ENCODE measurements at regions of chr1 and their contacts with region 1.

Region 1: DNA sequence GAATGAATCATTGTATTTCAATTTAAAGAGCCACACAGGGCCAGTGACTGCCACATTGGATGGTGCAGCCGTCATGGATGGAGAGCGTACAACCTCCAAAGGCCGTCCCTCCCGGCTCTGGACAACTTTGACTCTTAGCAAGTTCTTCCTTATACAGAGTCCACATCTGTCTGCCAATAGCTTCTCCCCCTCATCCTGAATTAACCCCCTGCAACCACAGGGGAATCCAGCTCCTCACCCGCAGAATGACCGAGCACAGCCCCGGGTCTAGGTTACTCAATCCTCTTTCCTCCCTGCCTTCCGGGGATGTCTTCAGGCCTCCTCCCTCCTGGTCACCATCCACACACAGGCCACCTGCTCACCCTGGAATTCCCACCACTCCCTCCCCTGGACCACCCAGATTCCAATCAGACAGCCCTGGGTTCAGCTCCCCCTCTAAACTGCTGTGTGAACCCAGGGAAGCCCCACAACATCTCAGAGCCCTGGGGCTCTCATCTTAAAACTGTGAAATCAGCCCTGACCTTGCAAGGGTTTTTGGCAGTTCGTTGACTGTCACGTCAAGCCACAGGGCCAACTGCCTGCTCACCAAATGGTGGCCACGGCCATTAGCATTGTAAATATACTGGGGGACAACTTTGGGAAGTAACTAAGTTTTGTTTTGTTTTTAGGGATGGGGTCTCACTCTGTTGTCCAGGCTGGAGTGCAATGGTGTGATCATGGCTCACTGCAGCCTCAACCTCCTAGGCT is 54.3 kb downstream of the HSPG2 start:
- DNase-seq: no peak
- ATAC-seq: no peak
- H3K4me3 ChIP-seq: no peak overlapping the region
- H3K27ac ChIP-seq: no peak overlapping the region
- H3K4me1 ChIP-seq: no peaks in the 10 kb centered on the region
- H3K27me3 ChIP-seq: no peaks in the 10 kb centered on the region
- CTCF ChIP-seq: no peak
- EP300 ChIP-seq: no peak
- POLR2A ChIP-seq: no peak
- RAD21 ChIP-seq: no peak

Region 2: DNA sequence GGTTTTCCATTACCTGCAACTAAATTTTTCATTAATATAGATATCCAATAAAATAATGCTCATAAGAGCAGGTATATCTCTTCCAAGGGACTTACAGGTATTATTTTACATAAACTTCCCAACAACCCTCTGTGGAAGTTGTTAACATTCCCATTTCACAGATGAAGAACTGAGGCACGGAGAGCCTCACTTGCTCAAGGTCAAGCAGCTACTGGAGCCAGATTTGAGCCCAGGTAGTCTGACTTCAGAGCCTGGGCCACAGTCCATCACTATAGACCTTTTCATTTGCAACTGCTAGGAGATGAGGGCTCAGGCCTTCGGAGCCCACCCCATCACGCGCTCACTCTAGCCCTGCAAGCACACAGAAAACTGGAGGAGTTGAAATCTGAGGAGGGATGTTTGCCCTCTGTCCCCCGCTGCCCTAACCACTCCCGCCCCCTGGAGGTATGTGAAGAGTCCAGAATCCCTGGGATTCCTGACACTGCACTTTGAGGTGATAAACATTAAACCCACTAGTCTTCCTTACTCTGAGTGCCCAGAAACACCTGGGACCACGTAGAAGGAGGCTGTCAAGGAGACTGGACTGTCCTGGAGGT is 385.3 kb before region 1 on chr1:
- CTCF ChIA-PET with region 1: no interaction called
- POLR2A ChIA-PET with region 1: interaction called, 11 read pairs
- RAD21 ChIA-PET with region 1: no interaction called
- SMC1A ChIA-PET with region 1: no interaction called
- in situ Hi-C with region 1: no loop called
- intact Hi-C with region 1: no loop called
- DNase-seq: no peak
- ATAC-seq: no peak
- H3K4me3 ChIP-seq: no peak overlapping the region
- H3K27ac ChIP-seq: no peak overlapping the region
- H3K4me1 ChIP-seq: no peaks in the 10 kb centered on the region
- H3K27me3 ChIP-seq: peaks cover 0 to 5% of the 10 kb centered on the region in 2 experiments; a peak in 3 of 4 replicates
- CTCF ChIP-seq: no peak
- EP300 ChIP-seq: no peak
- POLR2A ChIP-seq: no peak
- RAD21 ChIP-seq: no peak

Region 3: DNA sequence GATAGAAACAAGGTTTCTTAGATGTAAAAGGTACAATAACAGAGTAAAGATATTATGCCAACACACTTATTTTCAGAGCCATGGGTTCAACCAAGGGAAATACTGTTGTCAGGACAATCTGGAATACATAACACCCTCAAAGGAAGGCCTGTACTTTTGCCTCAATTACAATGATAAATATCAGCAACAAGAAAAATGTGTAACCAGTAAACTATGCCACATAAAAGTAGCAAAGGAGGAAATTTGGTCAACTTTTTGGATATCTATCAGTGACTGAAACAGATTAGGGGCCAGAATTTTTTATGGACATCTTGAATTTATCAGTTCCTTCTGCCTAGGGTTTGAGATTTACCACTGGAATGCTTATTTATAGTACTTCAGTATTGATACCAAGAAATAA is 189.1 kb before region 1 on chr1:
- CTCF ChIA-PET with region 1: no interaction called
- POLR2A ChIA-PET with region 1: no interaction called
- RAD21 ChIA-PET with region 1: no interaction called
- SMC1A ChIA-PET with region 1: no interaction called
- in situ Hi-C with region 1: no loop called
- intact Hi-C with region 1: no loop called
- DNase-seq: no peak
- ATAC-seq: no peak
- H3K4me3 ChIP-seq: no peak overlapping the region
- H3K27ac ChIP-seq: no peak overlapping the region
- H3K4me1 ChIP-seq: no peaks in the 10 kb centered on the region
- H3K27me3 ChIP-seq: no peaks in the 10 kb centered on the region
- CTCF ChIP-seq: no peak
- EP300 ChIP-seq: no peak
- POLR2A ChIP-seq: no peak
- RAD21 ChIP-seq: no peak

Region 4: DNA sequence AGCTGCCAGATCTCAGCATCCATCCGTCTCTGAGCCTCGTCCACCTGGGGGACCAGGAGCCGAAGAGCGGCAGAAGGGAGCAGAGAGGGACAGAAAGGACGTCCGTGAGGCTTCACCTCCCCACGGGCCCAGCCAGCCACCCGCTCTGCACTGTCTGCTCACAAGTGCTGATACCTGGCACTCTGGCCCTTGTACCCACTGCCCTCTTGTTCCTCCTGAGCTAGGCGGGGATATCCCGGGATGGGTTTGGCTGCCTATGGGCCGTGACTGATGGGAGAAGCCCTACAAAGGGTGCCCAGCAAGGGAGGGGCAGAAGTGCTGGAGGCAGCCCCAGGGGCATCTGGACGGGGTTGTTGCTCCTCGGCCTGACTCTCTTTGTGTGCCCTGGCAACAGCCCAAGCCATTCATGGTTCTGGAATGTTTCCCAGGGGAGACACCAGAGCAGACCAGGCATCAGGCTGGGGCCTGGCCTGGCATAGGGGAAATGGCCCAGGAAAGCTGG is 13.2 kb before region 1 on chr1:
- CTCF ChIA-PET with region 1: interaction called, 11 read pairs
- POLR2A ChIA-PET with region 1: interaction called, 3 read pairs
- RAD21 ChIA-PET with region 1: interaction called, 3 read pairs
- SMC1A ChIA-PET with region 1: interaction called, 4 read pairs
- in situ Hi-C with region 1: no loop called
- intact Hi-C with region 1: no loop called
- DNase-seq: no peak
- ATAC-seq: no peak
- H3K4me3 ChIP-seq: no peak overlapping the region
- H3K27ac ChIP-seq: no peak overlapping the region
- H3K4me1 ChIP-seq: peaks cover 28% of the 10 kb centered on the region
- H3K27me3 ChIP-seq: no peaks in the 10 kb centered on the region; a peak in 1 of 4 replicates
- CTCF ChIP-seq: no peak
- EP300 ChIP-seq: no peak
- POLR2A ChIP-seq: no peak
- RAD21 ChIP-seq: no peak

Region 5: DNA sequence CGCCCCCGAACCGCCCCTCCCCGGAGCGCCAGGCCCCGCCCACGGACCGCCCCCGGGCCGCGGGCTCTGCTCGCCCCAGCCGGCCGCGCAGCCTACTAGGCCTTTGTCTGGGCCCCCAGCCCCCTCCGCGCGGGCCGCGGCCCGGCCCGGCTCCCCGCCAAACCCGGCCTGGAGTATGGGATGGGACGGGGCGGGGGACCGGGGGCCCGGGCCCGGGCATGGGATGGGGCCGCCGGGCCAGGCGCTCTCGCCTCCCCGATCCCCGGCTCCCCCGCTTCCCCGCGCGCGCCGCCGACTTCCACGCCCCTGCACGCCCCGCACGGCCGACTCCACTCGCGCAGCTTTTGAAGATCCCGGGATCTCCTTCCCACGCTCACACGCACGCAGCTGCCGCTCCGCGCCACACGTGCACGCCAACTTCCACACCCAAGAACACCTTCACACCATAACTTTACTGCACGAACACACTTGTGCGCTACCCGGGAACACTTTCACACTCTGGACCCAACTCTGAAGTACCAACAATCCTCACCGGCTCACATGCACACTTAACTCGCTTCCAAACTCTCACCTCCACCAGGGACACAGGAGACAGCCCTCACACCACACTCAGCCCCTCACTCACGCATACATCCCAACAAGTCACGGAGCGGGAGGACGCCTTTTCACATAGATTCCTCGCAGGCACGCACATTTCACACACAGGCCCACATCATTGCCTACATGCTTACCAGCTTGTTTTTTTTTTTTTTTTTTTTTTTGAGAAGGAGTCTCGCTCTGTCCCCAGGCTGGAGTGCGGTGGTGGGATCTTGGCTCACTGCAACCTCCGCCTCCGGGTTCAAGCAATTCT is 54.8 kb after region 1 on chr1:
- CTCF ChIA-PET with region 1: no interaction called
- POLR2A ChIA-PET with region 1: no interaction called
- RAD21 ChIA-PET with region 1: no interaction called
- SMC1A ChIA-PET with region 1: no interaction called
- in situ Hi-C with region 1: no loop called
- intact Hi-C with region 1: no loop called
- DNase-seq: no peak
- ATAC-seq: peak; percentile 89
- H3K4me3 ChIP-seq: peak overlapping the region; percentile 53; the same call in 1 of the 2 replicates
- H3K27ac ChIP-seq: no peak overlapping the region
- H3K4me1 ChIP-seq: no peaks in the 10 kb centered on the region; the same call in 1 of the 2 replicates
- H3K27me3 ChIP-seq: peaks cover 0 to 6% of the 10 kb centered on the region in 2 experiments; a peak in 2 of 4 replicates
- CTCF ChIP-seq: no peak
- EP300 ChIP-seq: no peak
- POLR2A ChIP-seq: no peak
- RAD21 ChIP-seq: no peak